Cardiac septum (tissue), 1 donor: ENCODE measurements at regions of chr11 and their contacts with region 1.

Region 1: DNA sequence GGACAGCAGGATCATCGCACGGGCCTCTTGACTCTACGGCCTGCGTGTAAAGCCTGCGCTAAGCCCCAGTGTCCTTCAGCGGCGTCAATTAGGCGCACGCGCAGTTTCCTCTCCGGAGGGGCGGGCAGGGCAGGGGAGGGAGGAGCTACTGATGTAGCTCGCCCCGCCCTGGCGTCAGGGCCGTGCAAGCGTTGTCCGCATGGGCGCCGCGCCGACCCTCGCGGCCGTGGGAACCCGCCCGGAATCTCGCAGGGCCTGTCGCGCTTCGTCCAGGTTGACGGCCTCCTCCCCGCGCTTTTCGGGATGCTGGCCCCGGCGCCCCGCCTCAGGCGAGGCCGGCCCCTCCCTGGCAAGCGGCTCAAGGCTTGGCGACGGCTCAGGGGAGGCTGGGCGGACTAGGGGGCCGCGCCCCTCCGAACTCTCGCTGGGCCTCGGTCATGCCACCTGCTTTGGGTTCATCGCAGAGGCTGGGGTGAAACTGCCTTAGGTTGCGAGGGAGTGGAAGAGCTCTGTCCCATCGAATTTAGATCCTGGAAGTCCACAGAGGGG is 61.1 kb downstream of the ST3GAL4 start:
- DNase-seq: peak; percentile 95

Region 2: DNA sequence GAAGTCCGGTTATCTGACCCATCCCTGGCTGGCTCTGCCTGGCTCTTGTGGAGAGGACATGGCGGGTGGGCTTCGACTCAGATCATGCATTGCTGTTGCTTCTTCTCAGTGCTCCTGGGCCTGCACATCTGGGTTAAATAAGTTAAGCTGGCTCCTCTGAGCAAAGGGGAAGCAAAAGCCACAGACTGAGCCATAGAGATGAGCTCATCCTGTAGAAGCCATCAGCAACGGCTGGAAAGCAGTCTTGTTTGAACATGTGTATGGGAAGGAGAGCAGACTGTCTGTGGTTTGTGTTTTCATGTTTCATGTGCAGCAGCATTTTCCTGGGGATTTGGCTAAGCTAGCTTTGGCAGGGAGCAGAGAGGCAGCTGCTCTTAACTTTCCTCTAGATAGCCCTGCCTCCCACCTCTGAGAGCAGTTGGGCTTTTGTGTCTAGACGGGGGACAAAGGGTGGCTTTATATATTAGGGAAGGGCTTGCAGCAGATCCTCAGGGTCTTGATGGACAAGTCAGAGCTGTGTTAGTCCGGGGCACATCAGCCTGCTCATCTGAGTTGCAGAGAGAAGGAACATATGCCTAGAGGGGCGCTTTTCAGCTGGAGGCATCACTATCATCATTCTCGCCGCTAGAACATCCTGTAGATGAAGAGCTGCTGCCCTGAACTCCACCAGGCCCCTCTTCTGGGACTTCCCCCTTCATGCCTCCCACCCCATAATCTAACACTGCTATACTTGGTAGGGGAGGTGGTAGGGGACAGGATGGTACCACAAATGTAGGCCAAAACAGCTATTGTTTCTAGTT is 97.8 kb before region 1 on chr11:
- intact Hi-C with region 1: loop called (anchors 1 kb)
- DNase-seq: no peak